HEK293 (cell line): ENCODE measurements at regions of chr11 and their contacts with region 1.

Region 1: DNA sequence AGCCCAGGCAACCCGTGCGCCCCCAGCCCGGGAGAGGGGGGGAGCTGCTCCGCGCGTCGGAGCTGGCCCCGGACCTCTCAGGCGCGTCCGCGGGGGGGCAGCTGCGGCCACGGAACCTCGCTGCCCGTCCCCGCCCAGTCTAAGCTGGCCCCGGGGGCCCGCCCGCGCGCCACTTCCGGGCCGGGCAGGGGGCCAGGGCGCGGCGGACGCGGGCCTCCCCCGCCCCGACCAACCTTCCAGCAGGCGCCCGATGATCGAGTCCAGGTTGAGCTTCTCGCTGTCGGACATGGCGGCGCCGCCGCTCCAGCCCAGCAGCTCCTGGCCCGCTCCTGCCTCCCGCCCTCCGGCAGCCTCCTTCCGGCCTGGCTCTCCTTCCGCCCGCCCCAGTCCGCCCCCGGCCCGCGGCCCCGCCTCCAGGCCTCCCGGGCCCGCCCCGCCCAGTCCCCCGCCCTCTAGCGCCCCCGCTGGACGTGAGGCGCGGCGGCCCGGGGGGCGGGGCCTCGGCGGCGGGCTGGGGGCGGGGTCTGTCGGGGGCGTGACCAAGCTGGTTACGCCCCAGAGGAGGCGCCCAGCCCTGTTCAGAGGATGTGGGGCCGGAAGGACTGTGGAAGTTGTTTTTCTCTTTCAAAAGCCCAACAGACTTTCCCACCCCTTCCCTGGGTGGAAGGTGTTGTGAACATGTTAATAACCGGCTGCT is at the start of gene PPP1CA:
- H3K4me3 ChIP-seq: peak within 1 kb of the TSS; percentile 79
- H3K27ac ChIP-seq: peak within 1 kb of the TSS; percentile 88
- H3K4me1 ChIP-seq: no peaks in the 10 kb centered on the region
- CTCF ChIP-seq: no peak

Region 2: DNA sequence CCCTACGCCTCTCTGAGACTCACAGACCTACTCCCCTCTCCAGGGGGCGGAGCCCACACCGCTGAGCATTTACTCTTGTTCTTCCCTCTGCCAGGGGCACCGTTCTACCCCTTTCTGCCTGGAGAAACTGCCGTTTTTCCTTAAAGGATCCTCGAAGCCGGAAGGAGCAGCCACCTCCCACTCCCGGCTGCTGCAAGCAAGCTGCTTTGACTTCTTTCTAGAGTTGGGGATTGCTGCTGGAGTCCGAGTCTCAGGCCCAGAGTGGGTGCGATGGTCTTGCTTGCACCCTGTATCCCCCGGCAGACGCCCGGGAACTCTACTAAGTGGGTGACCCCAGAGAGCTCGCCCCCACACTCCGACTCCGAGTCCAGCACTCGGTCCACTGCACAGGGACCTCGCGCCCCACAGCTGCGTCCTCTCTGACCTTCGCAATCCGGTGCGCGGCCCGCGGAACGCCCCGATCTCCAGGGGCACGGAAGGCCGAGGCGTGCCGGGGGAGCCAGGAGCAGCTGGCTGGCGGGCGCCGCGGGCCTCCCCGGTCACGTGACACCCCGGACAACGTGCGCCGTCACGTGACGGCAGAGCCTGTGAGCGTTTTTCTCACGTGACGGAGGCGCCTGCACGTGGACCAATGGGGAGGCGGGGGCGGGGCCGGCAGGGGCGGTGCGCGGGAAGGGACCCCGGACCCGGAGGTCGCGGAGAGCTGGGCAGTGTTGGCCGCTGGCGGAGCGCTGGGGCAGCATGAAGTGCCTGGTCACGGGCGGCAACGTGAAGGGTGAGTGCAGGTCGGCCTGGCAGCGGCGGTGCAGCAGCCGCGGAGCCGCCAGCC is 10.1 kb before region 1 on chr11 and contains the start of gene RAD9A:
- CTCF ChIA-PET with region 1: interaction called, 20 read pairs
- POLR2A ChIA-PET with region 1: interaction called, 53 read pairs
- H3K4me3 ChIP-seq: peak within 1 kb of the TSS; percentile 76
- H3K27ac ChIP-seq: peak within 1 kb of the TSS; percentile 67
- H3K4me1 ChIP-seq: 0 out of 2 replicates have a peak, but pooled peaks cover 3% of the 10 kb centered on the region
- CTCF ChIP-seq: no peak; the same call in 1 of the 2 replicates

Region 3: DNA sequence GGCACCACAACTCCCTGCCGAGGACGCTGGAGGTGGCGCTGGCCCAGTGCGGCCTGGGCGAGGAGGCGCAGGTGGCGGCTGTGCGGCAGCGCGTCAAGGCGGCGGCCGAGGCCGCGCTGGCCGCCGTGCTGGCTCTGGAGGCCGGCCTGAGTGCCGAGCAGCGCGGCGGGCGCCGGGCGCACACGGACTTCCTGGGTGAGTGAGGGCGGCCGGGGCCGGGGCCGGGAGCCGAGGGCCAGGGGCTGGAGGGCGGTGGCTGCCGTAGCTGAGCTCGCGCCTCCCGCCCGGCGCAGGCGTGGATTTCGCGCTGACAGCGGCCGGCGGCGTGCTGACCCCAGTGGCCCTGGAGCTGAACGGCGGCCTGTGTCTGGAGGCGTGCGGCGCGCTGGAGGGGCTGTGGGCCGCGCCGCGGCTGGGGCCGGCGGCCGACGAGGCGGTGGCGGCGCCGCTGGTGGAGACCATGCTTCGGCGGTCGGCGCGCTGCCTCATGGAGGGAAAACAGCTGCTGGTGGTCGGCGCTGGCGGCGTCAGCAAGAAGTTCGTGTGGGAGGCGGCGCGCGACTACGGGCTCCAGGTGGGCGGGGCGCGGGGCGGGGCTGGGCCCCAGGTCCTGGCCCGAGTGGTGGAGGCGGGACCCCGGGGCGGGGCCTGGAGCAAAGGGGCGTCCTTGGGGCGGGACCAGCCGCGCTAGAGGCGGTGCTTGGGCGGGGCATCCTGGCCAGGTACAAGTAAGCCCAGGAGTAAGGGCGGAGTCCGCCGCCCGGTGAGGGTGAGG is 19.2 kb after region 1 on chr11:
- CTCF ChIA-PET with region 1: interaction called, 8 read pairs
- POLR2A ChIA-PET with region 1: interaction called, 25 read pairs
- H3K4me3 ChIP-seq: peak overlapping the region; percentile 27
- H3K27ac ChIP-seq: peak overlapping the region; percentile 21; the same call in 1 of the 2 replicates
- H3K4me1 ChIP-seq: no peaks in the 10 kb centered on the region; the same call in 1 of the 2 replicates
- CTCF ChIP-seq: no peak

Region 4: GRCh38 chr11:67439321-67439883 is 37.8 kb after region 1 on chr11:
- CTCF ChIA-PET with region 1: interaction called, 5 read pairs
- POLR2A ChIA-PET with region 1: interaction called, 10 read pairs
- H3K4me3 ChIP-seq: no peak overlapping the region
- H3K27ac ChIP-seq: no peak overlapping the region
- H3K4me1 ChIP-seq: no peaks in the 10 kb centered on the region
- CTCF ChIP-seq: peak; percentile 42; the same call in 1 of the 2 replicates

Region 5: DNA sequence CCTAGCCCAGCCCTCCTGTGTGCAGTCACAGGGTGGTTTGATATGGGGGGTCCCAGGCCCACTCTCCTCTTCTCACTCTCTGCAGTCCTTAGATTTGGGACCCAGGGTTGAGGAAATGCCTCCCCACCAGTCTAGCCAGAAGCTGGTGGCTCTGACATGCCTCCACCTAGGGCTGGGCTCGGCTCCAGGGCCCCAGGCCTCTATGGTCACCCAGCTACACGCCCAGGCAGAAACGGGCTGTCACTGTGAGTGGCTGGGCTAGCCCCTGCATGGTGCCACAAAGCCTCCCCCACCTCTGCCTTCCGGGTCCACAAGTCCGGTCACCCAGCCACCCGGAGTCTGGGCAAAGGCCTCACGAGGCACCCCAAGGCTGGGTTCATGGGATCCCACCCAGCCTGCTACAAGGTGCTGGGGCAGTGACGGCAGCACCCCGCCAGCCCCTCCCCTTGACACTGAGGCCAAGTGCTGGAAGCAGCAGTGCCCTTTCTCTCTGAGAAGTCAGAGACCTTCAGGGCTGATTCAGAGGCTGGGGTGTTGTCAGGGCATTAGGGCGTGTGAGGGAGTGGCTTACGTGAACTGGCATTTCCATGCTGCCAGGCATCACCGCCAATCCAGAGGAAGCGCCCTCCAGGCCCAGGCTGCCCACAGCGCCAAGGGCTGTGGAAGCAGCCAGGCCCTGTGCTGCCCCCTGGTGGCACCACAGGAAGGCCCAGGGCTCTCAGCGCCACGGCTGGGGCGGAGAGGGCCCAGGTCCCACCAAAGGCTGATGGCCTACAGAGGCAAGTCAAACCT is 104.2 kb after region 1 on chr11:
- CTCF ChIA-PET with region 1: interaction called, 6 read pairs
- POLR2A ChIA-PET with region 1: interaction called, 12 read pairs
- H3K4me3 ChIP-seq: no peak overlapping the region
- H3K27ac ChIP-seq: peak overlapping the region; percentile 20
- H3K4me1 ChIP-seq: no peaks in the 10 kb centered on the region
- CTCF ChIP-seq: peak; percentile 92